AG04449 (cell line): ENCODE measurements at regions of chr1 and their contacts with region 1.

Region 1: GRCh38 chr1:19918057-19918456 is 5.4 kb downstream of the PLA2G2E start:
- DNase-seq: peak; percentile 49
- H3K4me3 ChIP-seq: no peak overlapping the region
- CTCF ChIP-seq: peak; percentile 86

Region 2: GRCh38 chr1:19903600-19903999 is 14.5 kb before region 1 on chr1:
- CTCF ChIA-PET with region 1: interaction called, 14 read pairs
- POLR2A ChIA-PET with region 1: no interaction called
- DNase-seq: no peak
- H3K4me3 ChIP-seq: no peak overlapping the region
- CTCF ChIP-seq: no peak

Region 3: DNA sequence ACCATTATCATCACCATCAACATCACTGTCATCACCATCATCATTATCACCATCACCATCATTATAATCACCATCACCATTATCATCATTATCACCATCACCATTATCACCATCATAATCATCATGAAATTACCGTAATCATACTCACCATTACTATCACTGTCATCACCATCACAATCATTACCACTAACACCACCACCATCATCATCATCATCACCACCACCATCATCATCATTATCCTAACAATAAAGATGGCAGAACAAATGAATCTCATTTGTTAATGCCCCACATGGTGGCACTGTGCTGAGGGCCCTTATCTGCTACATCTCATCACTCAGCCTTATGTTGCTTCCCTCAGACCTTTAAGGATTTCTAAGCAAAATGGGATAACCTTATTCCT is 14.8 kb after region 1 on chr1:
- CTCF ChIA-PET with region 1: interaction called, 17 read pairs
- POLR2A ChIA-PET with region 1: no interaction called
- DNase-seq: no peak
- H3K4me3 ChIP-seq: no peak overlapping the region
- CTCF ChIP-seq: no peak

Region 4: DNA sequence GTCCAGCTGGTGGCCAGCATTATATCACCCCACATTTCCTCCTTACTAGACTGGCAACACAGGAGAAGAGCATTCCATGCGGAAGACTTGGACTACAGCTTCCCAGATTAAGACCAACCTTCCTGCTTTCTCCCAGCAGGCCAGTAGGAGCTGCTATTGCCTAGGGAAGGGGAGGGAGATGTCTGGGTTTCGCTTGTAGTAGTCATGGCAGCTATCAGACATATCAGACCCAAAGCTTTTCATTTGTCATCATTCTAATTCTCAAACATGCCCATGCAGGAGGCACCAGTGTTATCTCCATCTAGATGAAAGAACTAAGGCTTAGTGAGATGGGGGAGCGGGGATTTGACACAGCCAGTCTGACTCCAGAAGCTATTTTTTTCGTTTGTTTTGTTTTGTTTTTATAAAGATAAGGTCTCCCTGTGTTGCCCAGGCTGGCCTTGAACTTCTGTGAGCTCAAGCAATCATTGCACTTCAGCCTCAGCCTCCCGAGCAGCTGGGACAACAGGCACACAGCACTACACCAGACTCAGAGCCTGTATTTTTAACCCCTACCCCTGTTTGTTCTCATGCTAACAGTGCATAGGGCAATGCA is 56.9 kb after region 1 on chr1:
- CTCF ChIA-PET with region 1: interaction called, 17 read pairs
- POLR2A ChIA-PET with region 1: no interaction called
- DNase-seq: peak; percentile 28
- H3K4me3 ChIP-seq: no peak overlapping the region
- CTCF ChIP-seq: peak; percentile 91